Activated naive CD4-positive, alpha-beta T cell treated with anti-CD3 and anti-CD28 coated beads for 36 hours (primary cell): ENCODE measurements at regions of chr10 and their contacts with region 1.

Region 1: GRCh38 chr10:74451127-74451829 is 300.3 kb downstream of the ADK start:
- DNase-seq: peak; percentile 6
- H3K4me3 Mint-ChIP-seq: no peak overlapping the region
- H3K27ac Mint-ChIP-seq: no peak overlapping the region
- H3K4me1 Mint-ChIP-seq: peaks cover 18% of the 10 kb centered on the region
- H3K27me3 Mint-ChIP-seq: no peaks in the 10 kb centered on the region

Region 2: DNA sequence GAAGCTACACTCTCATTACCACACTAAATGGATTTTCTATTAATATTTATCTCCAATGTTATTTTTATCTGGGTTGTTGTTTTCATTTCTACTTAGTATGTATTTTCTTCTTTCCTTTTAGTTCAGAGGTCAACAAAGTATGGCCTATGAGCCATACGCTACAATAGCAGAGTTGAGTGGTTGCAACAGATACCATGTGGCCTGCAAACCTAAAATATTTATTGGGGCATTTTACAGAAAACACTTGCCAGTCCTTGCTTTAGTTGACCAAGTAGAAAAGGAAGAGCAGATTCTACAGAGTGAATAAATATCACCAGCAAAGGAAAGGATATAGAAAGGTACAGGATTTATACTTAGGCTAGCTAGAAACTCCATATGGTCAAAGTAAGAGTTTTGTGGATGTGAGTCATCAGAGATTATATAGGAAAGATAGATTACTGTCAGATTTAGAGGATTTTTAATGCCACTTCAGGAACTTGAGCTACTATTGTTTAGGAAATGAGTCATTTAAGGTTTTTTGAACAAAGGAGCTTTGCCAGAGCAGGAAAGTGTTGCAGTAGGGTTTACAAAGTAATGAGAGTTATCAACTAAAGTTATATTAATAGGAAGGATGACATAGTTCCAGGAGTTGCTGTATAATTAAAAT is 51.8 kb after region 1 on chr10:
- CTCF ChIA-PET with region 1: no interaction called
- intact Hi-C with region 1: loop called (anchors 1 kb)
- DNase-seq: no peak
- H3K4me3 Mint-ChIP-seq: no peak overlapping the region
- H3K27ac Mint-ChIP-seq: peak overlapping the region; percentile 75
- H3K4me1 Mint-ChIP-seq: peaks cover 52% of the 10 kb centered on the region
- H3K27me3 Mint-ChIP-seq: no peaks in the 10 kb centered on the region